MCF 10A (cell line): ENCODE measurements at regions of chr13 and their contacts with region 1.

Region 1: DNA sequence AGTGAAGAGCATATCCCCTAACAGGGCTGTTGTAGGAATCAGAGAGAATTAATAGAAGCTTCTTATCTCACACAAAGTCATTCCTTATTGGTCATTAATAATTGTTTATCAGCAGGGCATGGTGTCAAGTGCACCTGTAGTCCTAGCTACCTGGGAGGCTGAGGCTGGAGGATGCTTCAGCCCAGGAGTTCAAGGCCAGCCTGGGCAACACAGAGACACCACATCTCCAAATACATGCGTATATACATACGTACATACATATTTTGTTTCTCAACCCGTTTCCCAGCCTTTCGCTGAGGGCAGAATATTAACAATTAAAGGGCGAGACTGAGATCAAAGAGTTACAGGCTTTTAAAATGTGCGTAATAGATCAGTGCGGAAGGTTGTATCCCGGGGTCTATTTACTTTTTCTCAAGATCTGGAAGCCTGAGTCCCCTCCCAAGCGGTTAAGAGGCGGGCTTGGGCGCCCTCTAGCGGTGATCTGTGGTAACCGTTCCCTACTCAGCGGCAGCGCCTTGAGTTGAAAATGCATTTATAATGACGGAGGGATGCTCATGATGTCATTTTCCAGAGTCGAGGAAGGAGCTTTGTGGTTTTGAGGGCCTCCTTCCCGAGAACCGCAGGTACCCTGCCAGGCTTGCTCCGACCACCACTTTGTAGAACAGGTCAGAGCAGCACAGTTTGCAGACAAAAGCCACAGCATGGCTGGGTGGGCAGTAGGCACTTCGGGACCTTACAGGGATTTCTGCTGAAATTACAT is 169.6 kb upstream of the GPR12 start:
- DNase-seq: peak; percentile 69
- H3K4me3 Mint-ChIP-seq: no peak overlapping the region
- H3K27ac Mint-ChIP-seq: no peak overlapping the region
- H3K4me1 Mint-ChIP-seq: no peaks in the 10 kb centered on the region
- H3K27me3 Mint-ChIP-seq: peaks cover 42% of the 10 kb centered on the region
- CTCF ChIP-seq: peak; percentile 91

Region 2: GRCh38 chr13:26482451-26483197 is 447.5 kb before region 1 on chr13:
- CTCF ChIA-PET with region 1: interaction called, 11 read pairs
- POLR2A ChIA-PET with region 1: no interaction called
- intact Hi-C with region 1: no loop called
- DNase-seq: peak; percentile 84
- H3K4me3 Mint-ChIP-seq: peak overlapping the region; percentile 30
- H3K27ac Mint-ChIP-seq: no peak overlapping the region
- H3K4me1 Mint-ChIP-seq: no peaks in the 10 kb centered on the region
- H3K27me3 Mint-ChIP-seq: no peaks in the 10 kb centered on the region
- CTCF ChIP-seq: peak; percentile 74

Region 3: GRCh38 chr13:26707122-26708006 is 222.8 kb before region 1 on chr13:
- CTCF ChIA-PET with region 1: interaction called, 57 read pairs
- POLR2A ChIA-PET with region 1: no interaction called
- intact Hi-C with region 1: loop called (anchors 1 kb)
- DNase-seq: peak; percentile 62
- H3K4me3 Mint-ChIP-seq: no peak overlapping the region
- H3K27ac Mint-ChIP-seq: no peak overlapping the region
- H3K4me1 Mint-ChIP-seq: no peaks in the 10 kb centered on the region
- H3K27me3 Mint-ChIP-seq: peaks cover 30% of the 10 kb centered on the region
- CTCF ChIP-seq: peak; percentile 82

Region 4: DNA sequence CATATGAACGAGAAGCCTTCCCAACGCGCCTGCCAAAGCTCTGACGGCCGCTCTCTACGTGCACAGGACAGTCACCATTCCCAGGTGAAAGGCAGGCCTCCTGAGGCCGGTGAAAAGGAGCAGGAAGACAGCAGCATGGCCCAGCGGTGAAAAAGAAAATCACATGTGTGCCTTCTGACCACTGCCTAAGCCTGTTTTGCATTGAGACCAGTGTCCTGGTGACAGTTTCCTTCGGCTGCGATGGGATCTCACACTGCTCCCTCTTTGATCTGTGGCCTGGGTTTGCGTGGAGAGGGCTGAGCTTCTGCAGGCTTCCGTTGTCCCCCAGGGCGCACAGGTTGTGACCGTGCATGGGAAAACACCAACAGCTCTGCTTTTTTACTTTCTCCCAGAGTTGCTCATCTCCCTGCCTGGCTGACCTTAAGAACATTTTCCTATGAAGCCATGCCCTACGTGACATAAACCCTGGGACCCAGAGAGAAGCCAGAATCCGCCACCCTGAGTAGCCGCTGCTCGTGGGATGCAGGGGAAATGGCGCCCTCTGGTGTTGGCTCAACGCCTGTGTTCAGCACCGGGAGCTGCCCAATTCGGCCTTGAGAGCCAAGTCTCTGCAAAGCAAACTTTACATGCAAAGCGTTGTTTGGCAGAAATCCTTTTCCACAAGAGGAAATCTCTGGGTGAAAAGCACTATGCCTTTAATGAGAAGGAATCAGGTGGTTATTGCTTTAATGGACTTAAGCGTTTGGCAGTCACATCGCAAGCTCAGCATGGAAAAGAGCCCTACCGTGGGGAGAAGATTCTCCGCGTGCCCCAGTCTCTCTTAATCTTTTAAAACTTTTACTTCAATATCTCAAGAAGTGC is 57.4 kb before region 1 on chr13:
- CTCF ChIA-PET with region 1: interaction called, 6 read pairs
- POLR2A ChIA-PET with region 1: no interaction called
- intact Hi-C with region 1: loop called (anchors 5 kb)
- DNase-seq: peak; percentile 54
- H3K4me3 Mint-ChIP-seq: no peak overlapping the region
- H3K27ac Mint-ChIP-seq: no peak overlapping the region
- H3K4me1 Mint-ChIP-seq: no peaks in the 10 kb centered on the region
- H3K27me3 Mint-ChIP-seq: peaks cover 19% of the 10 kb centered on the region
- CTCF ChIP-seq: peak; percentile 79

Region 5: DNA sequence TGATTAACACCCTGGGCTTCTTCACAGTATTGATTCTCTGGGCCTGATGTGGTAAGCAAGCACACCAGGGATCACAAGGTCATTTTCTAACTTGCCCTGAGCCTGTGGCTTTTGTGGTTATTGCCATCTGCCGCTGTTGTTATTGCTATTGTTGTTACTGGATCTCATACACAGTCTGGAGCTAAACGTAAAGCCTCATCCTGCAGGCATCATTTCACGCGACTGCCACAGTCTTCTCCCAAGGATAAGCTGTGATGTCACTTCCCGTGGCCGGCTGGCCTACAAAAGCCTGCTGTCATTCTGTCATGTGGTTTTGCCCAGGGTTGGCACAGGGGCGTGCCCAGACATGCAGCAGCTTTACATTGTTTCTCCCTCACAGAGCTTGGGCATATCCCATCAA is 15.5 kb before region 1 on chr13:
- CTCF ChIA-PET with region 1: interaction called, 30 read pairs
- POLR2A ChIA-PET with region 1: interaction called, 4 read pairs
- intact Hi-C with region 1: no loop called
- DNase-seq: peak; percentile 63
- H3K4me3 Mint-ChIP-seq: no peak overlapping the region
- H3K27ac Mint-ChIP-seq: peak overlapping the region; percentile 49
- H3K4me1 Mint-ChIP-seq: peaks cover 10% of the 10 kb centered on the region
- H3K27me3 Mint-ChIP-seq: peaks cover 18% of the 10 kb centered on the region
- CTCF ChIP-seq: no peak

Region 6: GRCh38 chr13:26946684-26947343 is 16.7 kb after region 1 on chr13:
- CTCF ChIA-PET with region 1: interaction called, 11 read pairs
- POLR2A ChIA-PET with region 1: no interaction called
- intact Hi-C with region 1: no loop called
- DNase-seq: peak; percentile 59
- H3K4me3 Mint-ChIP-seq: no peak overlapping the region
- H3K27ac Mint-ChIP-seq: no peak overlapping the region
- H3K4me1 Mint-ChIP-seq: no peaks in the 10 kb centered on the region
- H3K27me3 Mint-ChIP-seq: no peaks in the 10 kb centered on the region
- CTCF ChIP-seq: peak; percentile 74